HepG2 (cell line): ENCODE measurements at regions of chr16 and their contacts with region 1.

Region 1: GRCh38 chr16:56382901-56383355 is 42.4 kb downstream of the AMFR start:
- DNase-seq: peak; percentile 56
- ATAC-seq: peak; percentile 79
- H3K4me3 ChIP-seq: no peak overlapping the region
- H3K27ac ChIP-seq: peak overlapping the region; percentile 38
- H3K4me1 ChIP-seq: peaks cover 29% of the 10 kb centered on the region
- H3K27me3 ChIP-seq: no peaks in the 10 kb centered on the region
- CTCF ChIP-seq: no peak
- EP300 ChIP-seq: no peak
- POLR2A ChIP-seq: no peak
- RAD21 ChIP-seq: no peak

Region 2: DNA sequence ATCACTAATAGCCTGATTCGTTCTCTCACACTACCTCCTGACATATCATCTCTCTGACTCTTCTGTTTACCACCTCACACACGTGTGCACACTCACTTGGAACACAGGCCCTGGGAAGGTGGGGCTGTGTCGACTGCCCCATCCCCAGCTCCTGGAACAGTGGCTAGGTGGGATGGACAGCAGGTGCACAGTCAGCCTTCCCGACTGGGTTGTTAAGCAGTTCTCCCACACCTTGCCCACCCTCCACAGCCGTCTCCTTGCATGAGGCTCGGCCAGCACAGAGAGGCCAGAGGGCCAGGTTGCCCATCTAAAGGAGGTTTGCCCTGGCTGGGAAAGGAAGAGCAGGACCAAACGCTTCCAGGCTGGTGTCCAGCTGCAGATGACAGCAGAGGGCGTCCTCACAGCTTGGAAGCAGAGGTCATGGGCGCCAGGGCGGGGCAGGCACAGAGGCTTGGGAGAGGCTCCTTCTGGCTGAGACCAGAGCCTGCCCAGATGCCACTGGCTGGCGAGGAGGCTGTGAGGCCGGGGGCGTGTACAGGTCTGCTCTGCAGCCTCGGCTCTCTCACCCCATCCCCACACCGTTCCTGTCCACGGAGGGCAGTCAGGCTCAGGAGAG is 50.4 kb before region 1 on chr16:
- CTCF ChIA-PET with region 1: no interaction called
- POLR2A ChIA-PET with region 1: no interaction called
- in situ Hi-C with region 1: no loop called
- intact Hi-C with region 1: loop called (anchors 2 kb)
- DNase-seq: peak; percentile 78
- ATAC-seq: peak; percentile 93
- H3K4me3 ChIP-seq: no peak overlapping the region
- H3K27ac ChIP-seq: no peak overlapping the region
- H3K4me1 ChIP-seq: no peaks in the 10 kb centered on the region
- H3K27me3 ChIP-seq: peaks cover 5 to 69% of the 10 kb centered on the region in 2 experiments; a peak in 4 of 5 replicates
- CTCF ChIP-seq: peak; percentile 99
- EP300 ChIP-seq: no peak
- POLR2A ChIP-seq: no peak
- RAD21 ChIP-seq: peak; percentile 95

Region 3: GRCh38 chr16:56401482-56401881 is 18.6 kb after region 1 on chr16:
- CTCF ChIA-PET with region 1: no interaction called
- POLR2A ChIA-PET with region 1: no interaction called
- in situ Hi-C with region 1: no loop called
- intact Hi-C with region 1: no loop called
- DNase-seq: peak; percentile 42
- ATAC-seq: peak; percentile 99
- H3K4me3 ChIP-seq: no peak overlapping the region
- H3K27ac ChIP-seq: no peak overlapping the region
- H3K4me1 ChIP-seq: no peaks in the 10 kb centered on the region
- H3K27me3 ChIP-seq: no peaks in the 10 kb centered on the region
- CTCF ChIP-seq: peak; percentile 48
- EP300 ChIP-seq: no peak
- POLR2A ChIP-seq: no peak
- RAD21 ChIP-seq: peak; percentile 25; the same call in 1 of the 2 replicates